PC-3 (cell line): ENCODE measurements at regions of chr17 and their contacts with region 1.

Region 1: GRCh38 chr17:50707289-50708049 is at the start of gene ANKRD40:
- DNase-seq: peak; percentile 98
- ATAC-seq: peak; percentile 71
- H3K4me3 ChIP-seq: peak within 1 kb of the TSS; percentile 82
- H3K27ac ChIP-seq: peak within 1 kb of the TSS; percentile 84
- H3K4me1 ChIP-seq: peaks cover 23% of the 10 kb centered on the region
- H3K27me3 ChIP-seq: no peaks in the 10 kb centered on the region
- CTCF ChIP-seq: no peak
- total RNA-seq, gene ANKRD40: 44.2 and 44.3 TPM in 2 replicates

Region 2: DNA sequence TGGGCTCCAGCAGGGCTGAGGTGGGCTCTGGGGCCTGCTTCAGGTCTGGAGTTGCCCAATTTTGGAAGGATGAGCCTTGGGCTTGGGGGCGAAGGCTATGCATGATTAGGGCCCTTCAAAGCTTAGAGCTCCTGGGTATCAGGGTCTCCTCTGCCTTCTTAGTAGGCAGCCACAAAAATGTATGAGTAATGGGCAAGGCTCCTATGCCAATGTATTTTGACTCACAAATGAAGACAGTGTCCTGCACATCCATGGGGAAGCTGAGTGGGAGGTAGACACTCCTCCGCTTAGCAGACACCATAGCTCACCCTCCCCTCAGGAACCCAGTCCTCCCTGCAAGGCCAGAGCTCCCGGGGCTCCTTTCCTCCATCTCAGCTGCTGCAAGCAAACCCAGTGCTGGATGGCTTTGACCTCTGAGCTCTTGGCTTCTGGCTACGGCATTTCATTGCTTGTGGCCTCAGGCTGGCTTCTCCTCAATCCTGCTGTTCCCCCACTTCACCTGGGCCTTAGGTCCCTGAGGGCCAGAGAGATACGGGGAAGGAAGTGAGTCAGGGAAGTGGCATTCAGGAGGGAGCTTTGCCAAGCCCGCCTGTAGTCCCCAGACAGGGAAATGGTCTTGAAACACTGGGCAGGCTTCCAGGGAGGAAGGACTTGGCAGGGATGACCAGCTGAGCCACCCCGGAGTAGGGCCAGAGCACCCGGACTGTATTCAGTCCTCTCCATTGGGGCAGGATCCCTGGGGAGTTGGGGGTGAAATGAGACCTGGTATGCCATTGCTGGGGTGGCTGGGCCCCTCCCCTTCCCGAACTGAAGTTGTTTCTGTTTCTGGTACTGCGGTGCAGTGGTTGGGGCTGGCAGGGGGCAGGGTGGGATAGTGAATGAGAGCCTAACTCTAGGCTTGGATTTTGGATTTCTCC is 68.4 kb before region 1 on chr17:
- CTCF ChIA-PET with region 1: interaction called, 15 read pairs
- POLR2A ChIA-PET with region 1: interaction called, 4 read pairs
- intact Hi-C with region 1: no loop called
- DNase-seq: peak; percentile 100
- ATAC-seq: peak; percentile 62
- H3K4me3 ChIP-seq: peak overlapping the region; percentile 72; the same call in 1 of the 2 replicates
- H3K27ac ChIP-seq: peak overlapping the region; percentile 90
- H3K4me1 ChIP-seq: peaks cover 78% of the 10 kb centered on the region
- H3K27me3 ChIP-seq: no peaks in the 10 kb centered on the region
- CTCF ChIP-seq: no peak

Region 3: DNA sequence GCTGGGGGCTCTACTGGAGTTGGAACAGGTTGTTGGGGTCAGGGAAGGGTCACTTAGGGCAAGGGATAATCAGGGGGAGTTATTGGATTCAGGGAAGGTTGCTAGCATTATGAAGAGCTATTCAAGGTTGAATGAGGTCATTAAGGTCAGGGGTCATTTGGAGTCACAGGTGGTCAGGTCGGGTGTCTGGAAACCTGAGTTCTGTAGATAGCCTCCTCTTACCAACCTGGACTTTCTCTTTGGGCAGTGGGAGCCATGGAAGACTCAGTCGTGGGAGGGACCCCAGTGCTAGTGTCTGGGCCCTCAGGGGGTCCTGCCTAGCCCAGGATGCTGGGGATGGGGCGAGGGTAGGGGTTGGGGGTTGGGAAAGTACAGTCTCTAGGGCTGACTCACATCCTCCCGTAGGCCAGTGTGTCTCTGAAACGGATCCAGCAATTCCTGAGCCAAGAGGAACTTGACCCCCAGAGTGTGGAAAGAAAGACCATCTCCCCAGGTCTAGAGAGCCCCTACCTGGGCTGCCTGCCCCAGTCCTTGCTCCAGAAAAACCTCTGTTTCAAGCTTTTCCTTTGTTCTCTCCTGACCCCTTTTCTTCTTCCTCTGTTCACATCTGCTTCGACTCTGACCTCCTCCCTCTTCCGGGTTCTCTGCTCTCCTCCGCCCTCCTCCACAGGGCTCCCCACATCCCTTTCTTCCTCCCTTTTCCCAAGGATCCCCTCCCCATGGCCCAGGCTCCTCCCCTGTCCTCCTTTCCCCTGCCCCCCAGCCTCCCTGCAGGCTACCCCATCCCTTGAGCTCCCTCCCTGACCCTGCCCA is 39.2 kb before region 1 on chr17:
- CTCF ChIA-PET with region 1: no interaction called
- POLR2A ChIA-PET with region 1: interaction called, 17 read pairs
- intact Hi-C with region 1: no loop called
- DNase-seq: peak; percentile 39
- ATAC-seq: peak; percentile 47
- H3K4me3 ChIP-seq: no peak overlapping the region
- H3K27ac ChIP-seq: no peak overlapping the region
- H3K4me1 ChIP-seq: peaks cover 20% of the 10 kb centered on the region
- H3K27me3 ChIP-seq: no peaks in the 10 kb centered on the region
- CTCF ChIP-seq: no peak

Region 4: GRCh38 chr17:50693036-50693682 is 14.3 kb before region 1 on chr17:
- CTCF ChIA-PET with region 1: interaction called, 3 read pairs
- POLR2A ChIA-PET with region 1: interaction called, 10 read pairs
- intact Hi-C with region 1: no loop called
- DNase-seq: peak; percentile 94
- ATAC-seq: peak; percentile 67
- H3K4me3 ChIP-seq: peak overlapping the region; percentile 50
- H3K27ac ChIP-seq: peak overlapping the region; percentile 86
- H3K4me1 ChIP-seq: peaks cover 91% of the 10 kb centered on the region
- H3K27me3 ChIP-seq: no peaks in the 10 kb centered on the region
- CTCF ChIP-seq: no peak

Region 5: GRCh38 chr17:50719144-50719923 is 11.9 kb after region 1 on chr17 and contains the start of gene LUC7L3:
- CTCF ChIA-PET with region 1: no interaction called
- POLR2A ChIA-PET with region 1: interaction called, 8 read pairs
- intact Hi-C with region 1: loop called (anchors 1 kb)
- DNase-seq: peak; percentile 98
- ATAC-seq: peak; percentile 92
- H3K4me3 ChIP-seq: peak within 1 kb of the TSS; percentile 91
- H3K27ac ChIP-seq: peak within 1 kb of the TSS; percentile 84
- H3K4me1 ChIP-seq: peaks cover 25% of the 10 kb centered on the region
- H3K27me3 ChIP-seq: no peaks in the 10 kb centered on the region
- CTCF ChIP-seq: no peak
- total RNA-seq, gene LUC7L3: 43.0 and 54.3 TPM in 2 replicates

Region 6: DNA sequence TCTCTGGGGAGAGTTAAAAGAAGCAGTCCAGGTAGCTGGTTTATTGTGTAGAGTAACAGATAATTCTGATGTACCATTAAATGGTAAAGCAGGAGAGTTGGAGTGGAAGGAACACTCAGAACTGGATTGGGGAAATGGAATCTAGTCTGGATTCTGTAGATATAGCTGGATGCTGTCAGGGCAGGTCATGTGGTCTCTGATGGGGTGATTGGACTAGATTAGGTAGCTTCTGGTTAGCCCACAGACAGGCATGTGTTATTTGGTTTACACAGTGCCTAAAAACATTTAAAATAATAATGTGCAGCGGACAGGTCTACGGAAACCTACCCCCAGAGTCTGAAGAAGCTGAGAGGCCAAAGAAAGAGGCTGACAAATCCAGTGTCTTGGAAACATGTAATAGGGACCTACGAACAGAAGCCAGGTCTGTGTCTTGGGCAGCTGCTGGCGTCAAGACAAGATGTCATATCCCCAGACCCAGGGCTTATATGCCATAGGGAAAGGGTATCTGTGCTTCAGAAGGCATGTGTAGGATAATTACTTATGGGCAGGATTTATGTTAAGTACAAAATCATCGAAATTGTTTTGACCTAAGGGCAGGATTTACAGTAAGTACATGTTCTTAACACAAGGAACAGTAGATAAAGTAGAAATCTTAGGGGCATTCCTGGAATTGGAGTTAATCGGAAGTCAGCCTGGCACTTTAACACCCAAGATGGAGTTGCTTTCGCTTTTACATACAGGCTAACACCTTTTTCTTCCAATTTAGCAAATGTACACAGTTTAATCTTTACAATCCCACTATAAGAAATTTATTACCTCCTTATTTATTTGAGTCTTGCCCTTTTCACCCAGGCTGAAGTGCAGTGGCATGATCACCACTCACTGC is 24.3 kb after region 1 on chr17:
- CTCF ChIA-PET with region 1: interaction called, 3 read pairs
- POLR2A ChIA-PET with region 1: interaction called, 11 read pairs
- intact Hi-C with region 1: no loop called
- DNase-seq: no peak
- ATAC-seq: no peak
- H3K4me3 ChIP-seq: no peak overlapping the region
- H3K27ac ChIP-seq: no peak overlapping the region
- H3K4me1 ChIP-seq: peaks cover 11% of the 10 kb centered on the region
- H3K27me3 ChIP-seq: no peaks in the 10 kb centered on the region
- CTCF ChIP-seq: no peak